GM12878 (cell line): ENCODE measurements at regions of chr15 and their contacts with region 1.

Region 1: DNA sequence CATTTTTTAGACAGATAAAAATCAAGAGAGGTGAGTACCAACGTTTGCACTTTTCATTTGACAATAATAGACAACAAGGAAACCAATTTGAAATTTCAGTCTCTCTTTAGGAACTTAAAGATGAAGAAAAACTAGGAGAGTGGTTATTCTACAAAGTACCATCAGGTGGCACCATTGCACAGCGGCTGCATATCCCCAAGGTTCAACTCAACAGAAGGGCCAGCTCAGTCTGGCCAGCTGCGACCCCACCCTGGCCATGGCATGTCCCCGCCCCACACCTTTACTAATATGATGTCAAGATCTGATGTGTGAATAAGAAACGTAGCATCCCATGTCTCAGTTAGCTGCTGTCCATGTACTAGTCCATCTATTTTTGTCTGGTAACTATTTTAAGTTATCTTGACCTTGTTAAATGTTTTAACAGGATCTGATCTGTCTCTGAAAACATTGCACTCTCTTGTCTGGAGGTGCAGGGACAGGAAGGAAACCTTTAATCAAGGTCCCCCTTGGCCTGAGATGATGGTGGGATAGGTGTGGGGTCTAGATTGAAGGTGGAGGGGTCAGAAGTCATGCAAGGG is 35.5 kb upstream of the CGNL1 start:
- DNase-seq: peak; percentile 15
- ATAC-seq: peak; percentile 84
- H3K4me3 ChIP-seq: no peak overlapping the region
- H3K27ac ChIP-seq: no peak overlapping the region
- H3K4me1 ChIP-seq: no peaks in the 10 kb centered on the region
- H3K27me3 ChIP-seq: peaks cover 0 to 2% of the 10 kb centered on the region in 2 experiments; a peak in 2 of 4 replicates
- CTCF ChIP-seq: peak; percentile 71 to 88 (median 75)
- EP300 ChIP-seq: no peak
- POLR2A ChIP-seq: no peak
- RAD21 ChIP-seq: peak; percentile 91

Region 2: GRCh38 chr15:57251941-57252340 is 88.8 kb before region 1 on chr15:
- CTCF ChIA-PET with region 1: no interaction called
- POLR2A ChIA-PET with region 1: no interaction called
- RAD21 ChIA-PET with region 1: no interaction called
- SMC1A ChIA-PET with region 1: no interaction called
- in situ Hi-C with region 1: no loop called
- intact Hi-C with region 1: no loop called
- DNase-seq: no peak
- ATAC-seq: no peak
- H3K4me3 ChIP-seq: no peak overlapping the region
- H3K27ac ChIP-seq: no peak overlapping the region
- H3K4me1 ChIP-seq: no peaks in the 10 kb centered on the region
- H3K27me3 ChIP-seq: no peaks in the 10 kb centered on the region
- CTCF ChIP-seq: no peak
- EP300 ChIP-seq: no peak
- POLR2A ChIP-seq: no peak
- RAD21 ChIP-seq: no peak

Region 3: DNA sequence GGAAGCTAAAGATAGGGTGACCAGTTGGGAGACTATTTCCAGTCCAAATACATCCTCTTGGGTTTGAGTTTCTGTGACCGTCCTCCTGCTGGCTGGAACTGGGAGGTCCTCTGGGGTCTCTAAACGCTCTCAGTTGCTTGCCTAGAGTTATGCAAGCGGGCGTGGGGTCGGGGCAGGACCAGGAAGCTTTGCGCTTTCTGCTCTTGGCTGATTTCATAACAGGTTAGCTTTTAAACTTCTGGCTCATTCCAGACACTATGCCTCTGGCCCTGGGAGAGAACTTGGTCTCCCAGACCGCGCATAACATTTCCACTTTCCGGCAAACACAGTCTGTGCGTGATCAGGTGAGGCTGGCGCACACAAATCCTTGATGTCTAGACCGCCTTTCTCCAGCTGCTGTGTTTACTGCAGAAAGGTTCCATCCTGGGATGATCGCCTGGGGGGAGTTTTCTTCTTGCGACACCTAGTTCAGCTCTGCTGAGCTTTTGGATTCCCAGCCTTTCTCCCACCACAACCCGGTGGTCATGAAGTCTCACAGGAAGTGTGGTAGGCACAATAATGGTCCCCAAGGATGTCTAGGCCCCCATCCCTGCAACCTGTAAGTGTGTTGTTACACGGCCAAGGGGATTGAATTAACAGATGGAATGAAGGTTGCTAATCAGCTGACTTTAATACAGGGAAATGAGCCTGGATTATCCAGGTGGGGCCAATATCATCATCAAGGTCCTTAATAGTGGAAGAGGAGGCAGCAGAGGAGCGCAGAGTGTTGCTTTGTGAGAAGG is 12.0 kb after region 1 on chr15:
- CTCF ChIA-PET with region 1: interaction called, 13 read pairs
- POLR2A ChIA-PET with region 1: no interaction called
- RAD21 ChIA-PET with region 1: no interaction called
- SMC1A ChIA-PET with region 1: interaction called, 3 read pairs
- in situ Hi-C with region 1: no loop called
- intact Hi-C with region 1: no loop called
- DNase-seq: no peak
- ATAC-seq: no peak
- H3K4me3 ChIP-seq: no peak overlapping the region
- H3K27ac ChIP-seq: no peak overlapping the region
- H3K4me1 ChIP-seq: no peaks in the 10 kb centered on the region
- H3K27me3 ChIP-seq: peaks cover 0 to 2% of the 10 kb centered on the region in 2 experiments; a peak in 3 of 4 replicates
- CTCF ChIP-seq: no peak
- EP300 ChIP-seq: no peak
- POLR2A ChIP-seq: no peak
- RAD21 ChIP-seq: no peak

Region 4: DNA sequence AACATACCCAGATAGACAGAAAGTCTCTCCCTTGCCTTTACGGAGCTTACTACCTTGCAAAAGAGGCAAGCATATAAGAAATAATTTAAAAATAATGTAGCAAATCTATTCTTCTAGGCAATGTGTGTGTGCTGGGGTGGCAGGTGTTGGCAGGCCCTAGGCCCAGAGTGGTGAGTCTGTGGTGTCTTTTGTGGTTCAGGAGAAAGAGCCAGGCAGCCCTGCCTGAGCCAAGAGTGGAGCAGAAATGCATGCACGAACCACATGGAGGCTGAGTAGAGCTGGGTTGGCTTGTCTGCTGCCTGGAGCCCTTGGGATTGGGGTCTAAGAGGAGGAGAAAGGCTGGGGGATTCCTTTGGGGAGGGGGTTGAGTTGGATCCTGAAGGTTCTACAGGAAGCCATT is 180.7 kb after region 1 on chr15:
- CTCF ChIA-PET with region 1: interaction called, 242 read pairs
- POLR2A ChIA-PET with region 1: interaction called, 3 read pairs
- RAD21 ChIA-PET with region 1: interaction called, 156 read pairs
- SMC1A ChIA-PET with region 1: interaction called, 83 read pairs
- in situ Hi-C with region 1: loop called (anchors 5 kb)
- intact Hi-C with region 1: no loop called
- DNase-seq: no peak
- ATAC-seq: no peak
- H3K4me3 ChIP-seq: no peak overlapping the region
- H3K27ac ChIP-seq: no peak overlapping the region
- H3K4me1 ChIP-seq: no peaks in the 10 kb centered on the region
- H3K27me3 ChIP-seq: no peaks in the 10 kb centered on the region
- CTCF ChIP-seq: no peak
- EP300 ChIP-seq: no peak
- POLR2A ChIP-seq: no peak
- RAD21 ChIP-seq: no peak

Region 5: GRCh38 chr15:57541805-57542504 is 201.2 kb after region 1 on chr15:
- CTCF ChIA-PET with region 1: interaction called, 39 read pairs
- POLR2A ChIA-PET with region 1: no interaction called
- RAD21 ChIA-PET with region 1: interaction called, 28 read pairs
- SMC1A ChIA-PET with region 1: interaction called, 11 read pairs
- in situ Hi-C with region 1: no loop called
- intact Hi-C with region 1: loop called (anchors 1 kb)
- DNase-seq: no peak
- ATAC-seq: peak; percentile 63
- H3K4me3 ChIP-seq: no peak overlapping the region
- H3K27ac ChIP-seq: no peak overlapping the region
- H3K4me1 ChIP-seq: peaks cover 12% of the 10 kb centered on the region
- H3K27me3 ChIP-seq: peaks cover 0 to 1% of the 10 kb centered on the region in 2 experiments; a peak in 2 of 4 replicates
- CTCF ChIP-seq: peak; percentile 72 to 86 (median 83)
- EP300 ChIP-seq: no peak
- POLR2A ChIP-seq: no peak
- RAD21 ChIP-seq: peak; percentile 39